Transverse colon (tissue), 4 donors: ENCODE measurements at regions of chr11 and their contacts with region 1.

Region 1: DNA sequence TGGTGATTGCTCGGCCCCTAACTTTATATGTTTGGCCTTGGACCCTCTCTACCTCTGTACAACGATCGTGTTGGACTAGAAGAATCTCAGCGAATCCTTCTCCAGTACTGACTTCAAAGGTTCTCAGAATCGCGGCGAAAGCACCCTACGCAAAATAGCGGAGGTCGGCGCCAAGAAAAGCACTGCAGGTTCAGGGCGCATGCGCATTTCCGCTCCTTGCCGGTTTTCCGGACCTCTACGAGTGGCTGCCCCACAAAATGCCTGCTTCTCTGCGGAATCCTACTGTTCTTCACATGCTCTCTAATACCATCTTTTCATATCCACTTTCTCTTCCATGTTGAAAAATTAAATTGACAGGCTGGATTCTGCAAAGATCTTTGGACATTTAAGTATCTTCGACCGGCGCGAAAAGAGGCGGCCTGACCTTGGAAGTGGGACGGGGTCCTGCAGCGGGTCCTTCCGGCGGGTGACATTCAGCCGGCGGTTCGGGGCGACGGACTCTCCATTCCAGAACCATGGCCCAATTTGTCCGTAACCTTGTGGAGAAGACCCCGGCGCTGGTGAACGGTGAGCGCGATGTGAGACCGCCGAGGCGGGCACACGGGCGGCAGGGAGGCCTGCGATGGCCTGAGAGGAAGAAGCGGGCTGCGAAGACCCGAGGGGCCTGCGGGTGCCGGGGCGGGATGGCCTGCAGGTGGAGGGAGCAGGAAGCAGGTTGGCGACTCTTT is at the start of gene ATP5MG:
- DNase-seq: peak; percentile 93
- H3K4me3 ChIP-seq: peak within 1 kb of the TSS; percentile 69 to 79 (median 72)
- H3K27ac ChIP-seq: peak within 1 kb of the TSS; percentile 82 to 95 (median 89)
- H3K4me1 ChIP-seq: peaks cover 13 to 32% (median 18%) of the 10 kb centered on the region in 4 donors
- H3K27me3 ChIP-seq: no peaks in the 10 kb centered on the region
- CTCF ChIP-seq: peak in 1 of 5 experiments; percentile 25
- EP300 ChIP-seq: no peak
- POLR2A ChIP-seq: peak; percentile 71
- total RNA-seq, gene ATP5MG: 3.8 to 74.2 (median 46.9) TPM

Region 2: DNA sequence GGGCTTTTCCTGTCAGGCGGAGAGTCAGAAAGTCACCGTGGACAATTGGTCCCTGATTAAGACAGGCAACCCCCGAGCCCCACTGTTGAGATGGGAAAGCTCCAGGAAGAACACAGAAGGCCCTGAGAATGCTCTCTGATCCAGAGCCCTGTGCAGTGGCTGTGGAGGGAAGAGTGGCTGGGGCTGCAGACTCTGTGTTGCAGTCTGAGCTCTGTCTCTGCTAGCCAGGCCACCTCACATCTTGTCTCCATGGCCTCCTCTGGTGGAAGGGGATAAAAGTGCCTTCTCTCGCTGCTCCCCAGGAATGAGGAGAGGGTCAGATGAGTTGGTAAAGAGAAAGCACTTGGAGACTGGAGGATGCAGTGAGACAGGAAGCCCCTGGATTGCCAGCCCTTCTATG is 932.4 kb before region 1 on chr11:
- in situ Hi-C with region 1: no loop called
- intact Hi-C with region 1: no loop called
- DNase-seq: no peak
- H3K4me3 ChIP-seq: no peak overlapping the region
- H3K27ac ChIP-seq: no peak overlapping the region
- H3K4me1 ChIP-seq: no peaks in the 10 kb centered on the region
- H3K27me3 ChIP-seq: no peaks in the 10 kb centered on the region
- CTCF ChIP-seq: no peak
- EP300 ChIP-seq: no peak
- POLR2A ChIP-seq: no peak

Region 3: GRCh38 chr11:118435893-118436624 is 34.7 kb after region 1 on chr11 and contains the start of gene KMT2A:
- in situ Hi-C with region 1: no loop called
- intact Hi-C with region 1: loop called (anchors 5 kb)
- DNase-seq: peak; percentile 98
- H3K4me3 ChIP-seq: peak within 1 kb of the TSS; percentile 93 to 99 (median 96)
- H3K27ac ChIP-seq: peak within 1 kb of the TSS; percentile 94 to 96 (median 94)
- H3K4me1 ChIP-seq: peaks cover 8 to 49% (median 34%) of the 10 kb centered on the region in 4 donors
- H3K27me3 ChIP-seq: no peaks in the 10 kb centered on the region
- CTCF ChIP-seq: peak in 3 of 5 experiments; percentile 14 to 96 (median 80)
- EP300 ChIP-seq: no peak
- POLR2A ChIP-seq: no peak
- total RNA-seq, gene KMT2A: 51.1 to 120 (median 75.5) TPM

Region 4: GRCh38 chr11:118476676-118477075 is 75.4 kb after region 1 on chr11:
- in situ Hi-C with region 1: no loop called
- intact Hi-C with region 1: no loop called
- DNase-seq: no peak
- H3K4me3 ChIP-seq: no peak overlapping the region
- H3K27ac ChIP-seq: no peak overlapping the region
- H3K4me1 ChIP-seq: no peaks in the 10 kb centered on the region
- H3K27me3 ChIP-seq: no peaks in the 10 kb centered on the region
- CTCF ChIP-seq: no peak
- EP300 ChIP-seq: no peak
- POLR2A ChIP-seq: no peak

Region 5: GRCh38 chr11:118488480-118489109 is 87.3 kb after region 1 on chr11:
- in situ Hi-C with region 1: loop called in 1 of 4 experiments (anchors 10 kb)
- intact Hi-C with region 1: loop called (anchors 2 kb)
- DNase-seq: peak; percentile 68
- H3K4me3 ChIP-seq: no peak overlapping the region
- H3K27ac ChIP-seq: no peak overlapping the region
- H3K4me1 ChIP-seq: no peaks in the 10 kb centered on the region
- H3K27me3 ChIP-seq: no peaks in the 10 kb centered on the region
- CTCF ChIP-seq: peak; percentile 76 to 80 (median 78)
- EP300 ChIP-seq: no peak
- POLR2A ChIP-seq: no peak

Region 6: GRCh38 chr11:118771547-118772288 is 370.4 kb after region 1 on chr11:
- in situ Hi-C with region 1: no loop called
- intact Hi-C with region 1: no loop called
- DNase-seq: no peak
- H3K4me3 ChIP-seq: no peak overlapping the region
- H3K27ac ChIP-seq: peak overlapping the region in 2 of 4 donors; percentile 15 to 43
- H3K4me1 ChIP-seq: peaks cover 0 to 78% (median 37%) of the 10 kb centered on the region in 4 donors
- H3K27me3 ChIP-seq: no peaks in the 10 kb centered on the region
- CTCF ChIP-seq: no peak
- EP300 ChIP-seq: no peak
- POLR2A ChIP-seq: no peak